ENCODE measurements at regions of chr14 and their contacts with region 1.

Region 1: GRCh38 chr14:75176142-75176820 is at the start of gene TMED10:
- DNase-seq: peak; percentile 84 to 96
- H3K4me3 ChIP-seq: peak within 1 kb of the TSS; percentile 80
- H3K27ac ChIP-seq: peak within 1 kb of the TSS; percentile 94
- H3K4me1 ChIP-seq: peaks cover 26% of the 10 kb centered on the region
- H3K27me3 ChIP-seq: no peaks in the 10 kb centered on the region
- CTCF ChIP-seq: no peak
- total RNA-seq, gene TMED10: 709 and 770 TPM in 2 replicates

Region 2: GRCh38 chr14:75223664-75224154 is 47.4 kb after region 1 on chr14:
- CTCF ChIA-PET with region 1: interaction called, 5 read pairs
- POLR2A ChIA-PET with region 1: interaction called, 3 read pairs
- intact Hi-C with region 1: loop called (anchors 1 kb)
- DNase-seq: peak; percentile 41 to 56
- H3K4me3 ChIP-seq: no peak overlapping the region
- H3K27ac ChIP-seq: peak overlapping the region; percentile 42
- H3K4me1 ChIP-seq: peaks cover 62% of the 10 kb centered on the region
- H3K27me3 ChIP-seq: no peaks in the 10 kb centered on the region
- CTCF ChIP-seq: no peak